ENCODE measurements at regions of chr15 and their contacts with region 1.

Region 1: GRCh38 chr15:98858610-98859023 is 149.0 kb downstream of the PGPEP1L start:
- DNase-seq: no peak
- H3K4me3 ChIP-seq: no peak overlapping the region
- H3K27ac ChIP-seq: peak overlapping the region; percentile 1
- H3K4me1 ChIP-seq: peaks cover 91% of the 10 kb centered on the region
- H3K27me3 ChIP-seq: no peaks in the 10 kb centered on the region
- CTCF ChIP-seq: no peak
- POLR2A ChIP-seq: no peak

Region 2: GRCh38 chr15:98838397-98839259 is 20.0 kb before region 1 on chr15:
- intact Hi-C with region 1: loop called (anchors 1 kb)
- DNase-seq: no peak
- H3K4me3 ChIP-seq: no peak overlapping the region
- H3K27ac ChIP-seq: no peak overlapping the region
- H3K4me1 ChIP-seq: peaks cover 23% of the 10 kb centered on the region
- H3K27me3 ChIP-seq: no peaks in the 10 kb centered on the region
- CTCF ChIP-seq: no peak
- POLR2A ChIP-seq: no peak

Measured in vagina (tissue), 2 donors.